PC-3 (cell line): ENCODE measurements at regions of chr6 and their contacts with region 1.

Region 1: GRCh38 chr6:56851541-56852259 is 103.2 kb upstream of the BEND6 start:
- DNase-seq: peak; percentile 77
- ATAC-seq: peak; percentile 94
- H3K4me3 ChIP-seq: peak overlapping the region; percentile 46; the same call in 1 of the 2 replicates
- H3K27ac ChIP-seq: peak overlapping the region; percentile 9
- H3K4me1 ChIP-seq: peaks cover 16% of the 10 kb centered on the region
- H3K27me3 ChIP-seq: no peaks in the 10 kb centered on the region
- CTCF ChIP-seq: peak; percentile 85

Region 2: GRCh38 chr6:56767892-56768531 is 83.7 kb before region 1 on chr6:
- CTCF ChIA-PET with region 1: interaction called, 5 read pairs
- POLR2A ChIA-PET with region 1: no interaction called
- intact Hi-C with region 1: loop called (anchors 1 kb)
- DNase-seq: peak; percentile 21
- ATAC-seq: no peak
- H3K4me3 ChIP-seq: no peak overlapping the region
- H3K27ac ChIP-seq: no peak overlapping the region
- H3K4me1 ChIP-seq: peaks cover 40% of the 10 kb centered on the region
- H3K27me3 ChIP-seq: no peaks in the 10 kb centered on the region
- CTCF ChIP-seq: peak; percentile 44; the same call in 1 of the 2 replicates